PC-9 (cell line): ENCODE measurements at regions of chr2 and their contacts with region 1.

Region 1: DNA sequence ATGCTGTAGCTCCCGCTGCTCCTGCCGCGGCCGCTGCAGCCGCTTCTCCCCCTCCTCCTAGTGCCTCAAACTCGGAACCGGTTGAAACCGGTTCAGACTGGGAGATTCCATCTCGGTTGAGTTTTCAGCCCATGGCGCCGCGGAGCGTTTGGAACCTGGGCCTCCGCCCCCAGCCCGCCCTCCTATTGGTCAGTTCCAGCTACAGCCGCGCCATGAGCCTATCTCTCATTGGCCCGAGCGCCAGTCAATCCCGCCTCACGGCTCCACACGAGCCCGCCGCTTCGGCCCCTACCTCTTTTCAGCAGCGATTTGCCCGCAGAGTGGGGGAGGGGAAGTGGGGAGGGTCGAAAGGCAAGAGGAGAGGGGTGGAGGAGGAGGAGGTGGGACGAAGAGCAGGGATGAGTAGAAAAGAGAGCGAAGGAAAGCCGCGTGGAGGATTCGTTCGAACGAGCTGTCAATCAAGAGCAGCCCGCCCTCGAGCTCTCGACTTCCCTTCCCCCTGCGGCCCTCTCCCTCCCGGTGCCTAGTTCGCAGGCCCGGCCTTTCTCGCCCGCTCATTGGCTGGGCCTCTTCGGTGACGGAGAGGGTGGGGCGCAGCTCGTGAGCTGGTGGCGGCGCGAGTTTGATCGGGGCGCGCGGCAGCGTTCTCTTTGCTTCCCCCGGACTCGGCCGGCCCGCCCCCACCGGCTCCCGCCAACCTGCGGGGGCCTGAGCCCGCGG is at the start of gene XPO1:
- DNase-seq: peak; percentile 96 to 100
- H3K4me3 ChIP-seq: peak within 1 kb of the TSS; percentile 94
- H3K27ac ChIP-seq: peak within 1 kb of the TSS; percentile 88
- H3K4me1 ChIP-seq: peaks cover 31% of the 10 kb centered on the region
- H3K27me3 ChIP-seq: no peaks in the 10 kb centered on the region
- CTCF ChIP-seq: no peak
- total RNA-seq, gene XPO1: 228 and 236 TPM in 2 replicates

Region 2: DNA sequence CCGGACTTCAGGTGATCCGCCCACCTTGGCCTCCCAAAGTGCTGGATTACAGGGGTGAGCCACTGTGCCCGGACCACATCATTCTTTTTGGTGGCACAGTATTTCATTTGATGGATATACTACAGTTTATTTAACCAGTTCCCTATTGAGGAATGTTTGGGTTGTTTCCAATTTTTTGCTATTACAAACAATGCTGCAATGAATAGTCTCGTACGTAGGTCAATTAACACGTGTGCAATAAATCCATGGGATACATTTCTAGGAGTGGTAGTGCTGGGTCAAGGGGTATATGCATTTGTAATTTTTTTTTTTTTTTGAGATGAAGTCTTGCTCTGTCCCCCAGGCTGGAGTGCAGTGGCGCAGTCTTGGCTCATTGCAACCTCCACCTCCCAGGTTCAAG is 28.2 kb after region 1 on chr2:
- CTCF ChIA-PET with region 1: no interaction called
- POLR2A ChIA-PET with region 1: no interaction called
- intact Hi-C with region 1: loop called (anchors 2 kb)
- DNase-seq: no peak
- H3K4me3 ChIP-seq: no peak overlapping the region
- H3K27ac ChIP-seq: no peak overlapping the region
- H3K4me1 ChIP-seq: peaks cover 10% of the 10 kb centered on the region; the same call in 1 of the 2 replicates
- H3K27me3 ChIP-seq: no peaks in the 10 kb centered on the region
- CTCF ChIP-seq: no peak

Region 3: GRCh38 chr2:61620244-61621159 is 82.1 kb after region 1 on chr2:
- CTCF ChIA-PET with region 1: no interaction called
- POLR2A ChIA-PET with region 1: no interaction called
- intact Hi-C with region 1: loop called (anchors 2 kb)
- DNase-seq: peak; percentile 72 to 93
- H3K4me3 ChIP-seq: no peak overlapping the region
- H3K27ac ChIP-seq: peak overlapping the region; percentile 56
- H3K4me1 ChIP-seq: peaks cover 22% of the 10 kb centered on the region
- H3K27me3 ChIP-seq: no peaks in the 10 kb centered on the region
- CTCF ChIP-seq: no peak

Region 4: GRCh38 chr2:61694312-61695274 is 156.2 kb after region 1 on chr2:
- CTCF ChIA-PET with region 1: no interaction called
- POLR2A ChIA-PET with region 1: no interaction called
- intact Hi-C with region 1: loop called (anchors 1 kb)
- DNase-seq: peak; percentile 74 to 97
- H3K4me3 ChIP-seq: peak overlapping the region; percentile 78
- H3K27ac ChIP-seq: peak overlapping the region; percentile 69
- H3K4me1 ChIP-seq: peaks cover 7% of the 10 kb centered on the region; the same call in 1 of the 2 replicates
- H3K27me3 ChIP-seq: no peaks in the 10 kb centered on the region
- CTCF ChIP-seq: peak; percentile 58

Region 5: GRCh38 chr2:61854474-61855182 is 316.3 kb after region 1 on chr2:
- CTCF ChIA-PET with region 1: no interaction called
- POLR2A ChIA-PET with region 1: no interaction called
- intact Hi-C with region 1: loop called (anchors 1 kb)
- DNase-seq: peak; percentile 92 to 96
- H3K4me3 ChIP-seq: peak overlapping the region; percentile 86
- H3K27ac ChIP-seq: peak overlapping the region; percentile 49
- H3K4me1 ChIP-seq: peaks cover 14% of the 10 kb centered on the region
- H3K27me3 ChIP-seq: no peaks in the 10 kb centered on the region
- CTCF ChIP-seq: no peak; the same call in 1 of the 2 replicates